Tibial artery (tissue), 4 donors: ENCODE measurements at regions of chr10 and their contacts with region 1.

Region 1: GRCh38 chr10:94443047-94443446 is 40.7 kb downstream of the TBC1D12 start:
- DNase-seq: no peak
- H3K4me3 ChIP-seq: no peak overlapping the region
- H3K27ac ChIP-seq: no peak overlapping the region
- H3K4me1 ChIP-seq: peaks cover 0 to 12% (median 5%) of the 10 kb centered on the region in 4 donors
- H3K27me3 ChIP-seq: no peaks in the 10 kb centered on the region
- CTCF ChIP-seq: no peak

Region 2: DNA sequence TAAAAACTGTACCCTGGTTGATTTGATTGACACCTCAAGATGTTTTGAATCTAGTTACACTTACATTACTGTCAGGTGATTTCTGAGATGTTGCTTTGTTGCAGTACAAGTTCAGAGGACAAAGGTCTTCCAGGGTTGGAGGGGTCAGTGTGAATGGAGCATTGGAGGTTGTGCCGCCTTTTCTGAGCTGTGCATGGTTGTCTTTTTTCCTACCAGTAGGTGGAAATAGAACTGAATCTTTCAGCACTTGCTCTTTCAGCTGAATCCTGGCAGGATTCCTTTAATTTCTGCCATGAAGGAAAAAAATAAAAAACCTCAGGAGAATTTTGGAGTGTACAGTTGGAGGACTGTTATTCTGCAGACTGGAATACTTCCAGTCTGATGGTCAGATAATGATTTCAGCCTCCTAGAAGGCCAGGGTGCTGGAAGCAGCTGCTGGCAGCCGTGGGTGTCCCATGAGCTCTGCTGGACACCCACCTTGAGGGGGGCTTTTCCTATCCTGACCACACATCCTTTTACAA is 366.7 kb before region 1 on chr10:
- intact Hi-C with region 1: loop called (anchors 10 kb)
- DNase-seq: no peak
- H3K4me3 ChIP-seq: peak overlapping the region in 1 of 2 donors; percentile 18
- H3K27ac ChIP-seq: no peak overlapping the region
- H3K4me1 ChIP-seq: peaks cover 0 to 19% (median 9%) of the 10 kb centered on the region in 4 donors
- H3K27me3 ChIP-seq: no peaks in the 10 kb centered on the region
- CTCF ChIP-seq: peak; percentile 64 to 83

Region 3: GRCh38 chr10:94279835-94280709 is 163.0 kb before region 1 on chr10:
- intact Hi-C with region 1: loop called (anchors 10 kb)
- DNase-seq: no peak
- H3K4me3 ChIP-seq: no peak overlapping the region
- H3K27ac ChIP-seq: peak overlapping the region in 1 of 2 donors; percentile 32
- H3K4me1 ChIP-seq: peaks cover 0 to 14% (median under 1%) of the 10 kb centered on the region in 4 donors
- H3K27me3 ChIP-seq: no peaks in the 10 kb centered on the region
- CTCF ChIP-seq: peak; percentile 71 to 83